ENCODE measurements at regions of chr3 and their contacts with region 1.

Region 1: DNA sequence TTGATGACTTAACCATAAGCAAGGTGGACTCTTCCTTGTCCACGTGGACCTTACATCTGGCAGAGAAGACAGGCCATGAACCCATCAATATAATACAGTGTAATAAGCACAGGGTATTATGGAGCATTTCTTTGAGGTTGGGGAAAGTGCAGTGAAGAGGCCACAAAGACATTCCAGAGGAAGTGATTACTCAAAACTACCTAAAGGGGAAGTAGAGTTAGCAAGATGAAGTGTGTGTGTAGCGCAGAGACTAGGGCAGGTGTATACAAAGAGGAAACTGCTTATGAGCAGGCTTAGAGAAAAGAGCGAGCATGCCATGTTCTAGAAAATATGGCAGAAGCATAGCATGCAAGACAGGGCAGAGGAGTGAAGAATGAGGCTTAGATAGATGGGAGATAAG is 17.9 kb downstream of the CP start:
- DNase-seq: peak; percentile 50
- ATAC-seq: peak; percentile 95
- H3K4me3 ChIP-seq: no peak overlapping the region
- H3K27ac ChIP-seq: no peak overlapping the region
- H3K4me1 ChIP-seq: peaks cover 11% of the 10 kb centered on the region
- H3K27me3 ChIP-seq: no peaks in the 10 kb centered on the region
- CTCF ChIP-seq: no peak
- EP300 ChIP-seq: no peak
- POLR2A ChIP-seq: no peak
- RAD21 ChIP-seq: 0 out of 2 replicates have a peak, but pooled peaks have one; percentile 18

Region 2: GRCh38 chr3:149174901-149175300 is 28.9 kb before region 1 on chr3:
- CTCF ChIA-PET with region 1: no interaction called
- POLR2A ChIA-PET with region 1: no interaction called
- RAD21 ChIA-PET with region 1: no interaction called
- SMC1A ChIA-PET with region 1: no interaction called
- in situ Hi-C with region 1: no loop called
- intact Hi-C with region 1: loop called (anchors 1 kb)
- DNase-seq: peak; percentile 44
- ATAC-seq: peak; percentile 97
- H3K4me3 ChIP-seq: no peak overlapping the region
- H3K27ac ChIP-seq: no peak overlapping the region
- H3K4me1 ChIP-seq: peaks cover 9% of the 10 kb centered on the region; the same call in 1 of the 2 replicates
- H3K27me3 ChIP-seq: no peaks in the 10 kb centered on the region
- CTCF ChIP-seq: no peak
- EP300 ChIP-seq: no peak
- POLR2A ChIP-seq: no peak
- RAD21 ChIP-seq: no peak

Region 3: DNA sequence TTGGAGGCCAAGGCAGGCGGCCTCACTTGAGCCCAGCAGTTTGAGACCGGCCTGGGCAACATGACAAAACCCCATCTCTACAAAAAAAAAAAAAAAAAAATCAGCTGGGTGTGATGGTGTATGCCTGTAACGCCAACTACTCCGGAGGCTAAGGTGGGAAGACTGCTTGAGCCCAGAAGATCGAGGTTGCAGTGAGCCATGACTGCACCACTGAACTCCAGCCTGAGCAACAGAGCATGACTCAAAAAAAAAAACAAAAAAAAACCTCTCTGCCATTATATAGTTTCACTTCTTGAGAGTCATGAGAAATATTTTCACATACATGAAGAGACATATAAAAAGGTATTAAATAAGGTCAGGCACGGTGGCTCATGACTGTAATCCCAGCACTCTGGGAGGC is 63.8 kb after region 1 on chr3:
- CTCF ChIA-PET with region 1: no interaction called
- POLR2A ChIA-PET with region 1: no interaction called
- RAD21 ChIA-PET with region 1: no interaction called
- SMC1A ChIA-PET with region 1: no interaction called
- in situ Hi-C with region 1: no loop called
- intact Hi-C with region 1: loop called (anchors 10 kb)
- DNase-seq: no peak
- ATAC-seq: peak; percentile 78
- H3K4me3 ChIP-seq: no peak overlapping the region
- H3K27ac ChIP-seq: no peak overlapping the region
- H3K4me1 ChIP-seq: 0 out of 2 replicates have a peak, but pooled peaks cover 2% of the 10 kb centered on the region
- H3K27me3 ChIP-seq: no peaks in the 10 kb centered on the region
- CTCF ChIP-seq: no peak
- EP300 ChIP-seq: no peak
- POLR2A ChIP-seq: no peak
- RAD21 ChIP-seq: no peak

Region 4: GRCh38 chr3:149726716-149727407 is 523.1 kb after region 1 on chr3:
- CTCF ChIA-PET with region 1: no interaction called
- POLR2A ChIA-PET with region 1: no interaction called
- RAD21 ChIA-PET with region 1: no interaction called
- SMC1A ChIA-PET with region 1: no interaction called
- in situ Hi-C with region 1: no loop called
- intact Hi-C with region 1: no loop called
- DNase-seq: peak; percentile 40
- ATAC-seq: peak; percentile 96
- H3K4me3 ChIP-seq: no peak overlapping the region
- H3K27ac ChIP-seq: no peak overlapping the region
- H3K4me1 ChIP-seq: peaks cover 12% of the 10 kb centered on the region
- H3K27me3 ChIP-seq: no peaks in the 10 kb centered on the region
- CTCF ChIP-seq: no peak
- EP300 ChIP-seq: peak; percentile 39 to 54; a peak in 2 of 4 replicates
- POLR2A ChIP-seq: no peak
- RAD21 ChIP-seq: no peak